Activated naive CD4-positive, alpha-beta T cell treated with anti-CD3 and anti-CD28 coated beads for 36 hours (primary cell): ENCODE measurements at regions of chr1 and their contacts with region 1.

Region 1: GRCh38 chr1:206479183-206480125 is 9.2 kb downstream of the IKBKE start:
- DNase-seq: peak; percentile 85
- H3K4me3 Mint-ChIP-seq: no peak overlapping the region
- H3K27ac Mint-ChIP-seq: peak overlapping the region; percentile 67
- H3K4me1 Mint-ChIP-seq: peaks cover 35% of the 10 kb centered on the region
- H3K27me3 Mint-ChIP-seq: no peaks in the 10 kb centered on the region

Region 2: DNA sequence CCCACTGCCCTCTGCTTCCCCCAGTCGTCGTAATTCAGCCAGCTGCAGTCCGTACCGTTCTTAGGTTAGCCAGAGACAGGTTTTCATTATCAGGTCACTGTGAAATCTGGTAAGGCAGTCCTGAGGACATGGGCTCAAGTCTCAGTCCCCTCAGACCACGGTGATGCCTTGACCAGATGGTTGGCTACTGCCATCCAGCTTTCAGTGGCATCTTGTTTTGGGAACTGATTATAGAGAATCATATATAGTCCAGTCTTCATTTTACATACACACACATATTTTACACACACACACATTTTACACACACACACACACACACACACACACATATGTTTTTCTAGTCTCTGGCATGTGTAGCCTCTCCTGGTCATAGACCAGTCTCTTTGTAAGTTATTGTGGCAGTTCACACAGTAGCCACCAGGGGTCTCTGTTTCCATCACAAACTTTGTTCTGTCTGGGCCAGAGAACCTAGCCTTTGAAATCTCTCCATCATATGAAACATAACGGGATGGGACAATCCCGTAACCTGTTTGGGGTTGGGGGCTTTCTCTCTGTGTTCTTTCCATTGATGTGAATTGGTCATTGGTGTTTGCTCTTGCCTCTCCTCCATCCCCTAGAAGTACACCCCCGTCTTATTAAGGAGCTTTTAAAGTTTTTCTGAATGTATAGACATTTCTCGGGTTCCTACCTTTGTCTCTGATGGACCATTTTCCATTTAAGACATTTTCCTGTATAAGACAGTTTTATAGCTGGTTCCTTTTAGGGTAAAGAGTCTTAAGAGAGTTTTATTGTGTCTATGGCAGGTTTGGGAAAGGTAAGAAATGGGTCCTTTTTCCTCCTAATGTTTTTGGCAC is 17.6 kb before region 1 on chr1:
- CTCF ChIA-PET with region 1: interaction called, 57 read pairs
- intact Hi-C with region 1: loop called (anchors 1 kb)
- DNase-seq: peak; percentile 92
- H3K4me3 Mint-ChIP-seq: no peak overlapping the region
- H3K27ac Mint-ChIP-seq: no peak overlapping the region
- H3K4me1 Mint-ChIP-seq: peaks cover 46% of the 10 kb centered on the region
- H3K27me3 Mint-ChIP-seq: no peaks in the 10 kb centered on the region

Region 3: GRCh38 chr1:206489980-206490770 is 10.7 kb after region 1 on chr1:
- CTCF ChIA-PET with region 1: interaction called, 25 read pairs
- intact Hi-C with region 1: no loop called
- DNase-seq: peak; percentile 87
- H3K4me3 Mint-ChIP-seq: no peak overlapping the region
- H3K27ac Mint-ChIP-seq: no peak overlapping the region
- H3K4me1 Mint-ChIP-seq: no peaks in the 10 kb centered on the region
- H3K27me3 Mint-ChIP-seq: no peaks in the 10 kb centered on the region